Heart right ventricle (tissue), 16 donors: ENCODE measurements at regions of chr9 and their contacts with region 1.

Region 1: DNA sequence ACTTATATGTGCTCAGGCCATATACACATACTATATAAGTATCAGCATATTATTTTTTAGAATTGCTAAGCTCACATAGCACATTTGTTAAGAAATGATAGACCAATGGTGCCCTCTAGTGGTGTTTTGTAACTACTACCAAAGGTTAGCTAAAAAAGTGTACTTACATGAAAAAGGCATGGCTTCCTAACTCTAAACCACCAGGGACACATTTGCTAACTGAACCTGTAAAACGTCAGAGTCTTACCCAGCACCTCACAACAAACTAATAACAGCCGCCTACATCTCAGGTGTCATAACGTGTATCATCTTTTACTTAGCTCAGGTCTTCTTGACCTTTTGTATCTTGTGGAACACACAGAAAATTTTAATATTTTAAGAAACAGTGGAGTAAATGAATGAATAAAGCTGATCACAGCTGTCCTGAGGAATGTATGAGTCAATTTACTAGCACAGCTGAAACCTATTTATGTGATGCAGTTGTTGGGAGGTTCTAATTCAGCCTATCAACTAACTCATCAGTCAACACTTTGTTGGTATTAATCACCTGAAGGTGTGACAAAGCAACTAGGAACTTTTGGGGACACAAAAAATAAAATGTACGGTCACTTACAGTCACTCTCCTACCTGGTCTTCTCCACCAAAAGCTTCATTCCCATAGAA is 72.9 kb downstream of the BAAT start:
- DNase-seq: peak in 1 of 2 donors; percentile 47
- ATAC-seq: no peak
- H3K4me3 ChIP-seq: no peak overlapping the region
- H3K27ac ChIP-seq: no peak overlapping the region
- H3K4me1 ChIP-seq: peaks cover 0 to 5% (median 0%) of the 10 kb centered on the region in 9 donors
- H3K27me3 ChIP-seq: peaks cover 0 to 19% (median 6%) of the 10 kb centered on the region in 7 donors
- CTCF ChIP-seq: peak; percentile 53 to 83 (median 74)

Region 2: GRCh38 chr9:99628849-99629620 is 1682.9 kb before region 1 on chr9:
- intact Hi-C with region 1: loop called in 1 of 10 experiments (anchors 5 kb)
- DNase-seq: no peak
- ATAC-seq: no peak
- H3K4me3 ChIP-seq: no peak overlapping the region
- H3K27ac ChIP-seq: no peak overlapping the region
- H3K4me1 ChIP-seq: peaks cover 0 to 6% (median 0%) of the 10 kb centered on the region in 9 donors
- H3K27me3 ChIP-seq: no peaks in the 10 kb centered on the region
- CTCF ChIP-seq: no peak

Region 3: GRCh38 chr9:100698945-100699344 is 612.9 kb before region 1 on chr9:
- intact Hi-C with region 1: loop called in 1 of 10 experiments (anchors 5 kb)
- DNase-seq: no peak
- ATAC-seq: no peak
- H3K4me3 ChIP-seq: no peak overlapping the region
- H3K27ac ChIP-seq: no peak overlapping the region
- H3K4me1 ChIP-seq: no peaks in the 10 kb centered on the region
- H3K27me3 ChIP-seq: peaks cover 0 to 4% (median 0%) of the 10 kb centered on the region in 7 donors
- CTCF ChIP-seq: no peak

Region 4: GRCh38 chr9:100714372-100715099 is 597.4 kb before region 1 on chr9:
- intact Hi-C with region 1: loop called (anchors 1 to 5 kb)
- DNase-seq: peak; percentile 25 to 69
- ATAC-seq: peak in 5 of 8 donors; percentile 46 to 62 (median 58)
- H3K4me3 ChIP-seq: peak overlapping the region in 3 of 10 donors; percentile 9 to 15 (median 11)
- H3K27ac ChIP-seq: no peak overlapping the region
- H3K4me1 ChIP-seq: no peaks in the 10 kb centered on the region
- H3K27me3 ChIP-seq: peaks cover 0 to 21% (median 7%) of the 10 kb centered on the region in 7 donors
- CTCF ChIP-seq: peak; percentile 46 to 92 (median 84)

Region 5: GRCh38 chr9:101126556-101126955 is 185.3 kb before region 1 on chr9:
- intact Hi-C with region 1: loop called in 2 of 10 experiments (anchors 10 kb)
- DNase-seq: no peak
- ATAC-seq: no peak
- H3K4me3 ChIP-seq: no peak overlapping the region
- H3K27ac ChIP-seq: no peak overlapping the region
- H3K4me1 ChIP-seq: no peaks in the 10 kb centered on the region
- H3K27me3 ChIP-seq: no peaks in the 10 kb centered on the region
- CTCF ChIP-seq: no peak